Colonic mucosa (tissue), 4 donors: ENCODE measurements at regions of chr13 and their contacts with region 1.

Region 1: DNA sequence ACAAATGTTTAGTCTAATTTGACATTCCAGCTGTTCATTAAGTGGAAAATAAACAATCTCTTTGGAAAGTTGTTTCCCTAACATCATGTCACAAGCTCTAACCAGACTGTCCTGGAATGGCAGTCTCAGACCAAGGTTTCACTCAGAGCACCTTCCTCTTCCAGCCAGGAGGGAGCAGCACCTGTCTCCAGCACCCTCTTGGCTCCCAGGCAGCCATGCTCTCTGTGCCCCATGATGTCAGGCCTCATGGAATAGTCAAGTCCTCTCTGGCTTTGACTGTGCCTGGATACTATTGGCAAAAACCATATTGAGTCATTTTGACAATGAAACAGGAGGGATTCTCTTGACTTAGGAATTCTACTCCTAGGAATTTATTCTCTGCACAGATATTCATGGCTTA is 171.4 kb downstream of the OXGR1 start:
- DNase-seq: peak; percentile 25
- H3K4me3 ChIP-seq: no peak overlapping the region
- H3K27ac ChIP-seq: no peak overlapping the region
- H3K4me1 ChIP-seq: no peaks in the 10 kb centered on the region
- H3K27me3 ChIP-seq: no peaks in the 10 kb centered on the region
- CTCF ChIP-seq: peak; percentile 37

Region 2: GRCh38 chr13:96958286-96958891 is 135.5 kb after region 1 on chr13:
- intact Hi-C with region 1: loop called (anchors 5 kb)
- DNase-seq: no peak
- H3K4me3 ChIP-seq: no peak overlapping the region
- H3K27ac ChIP-seq: no peak overlapping the region
- H3K4me1 ChIP-seq: no peaks in the 10 kb centered on the region
- H3K27me3 ChIP-seq: no peaks in the 10 kb centered on the region
- CTCF ChIP-seq: peak; percentile 57